Uterus (tissue), 4 donors: ENCODE measurements at regions of chr2 and their contacts with region 1.

Region 1: DNA sequence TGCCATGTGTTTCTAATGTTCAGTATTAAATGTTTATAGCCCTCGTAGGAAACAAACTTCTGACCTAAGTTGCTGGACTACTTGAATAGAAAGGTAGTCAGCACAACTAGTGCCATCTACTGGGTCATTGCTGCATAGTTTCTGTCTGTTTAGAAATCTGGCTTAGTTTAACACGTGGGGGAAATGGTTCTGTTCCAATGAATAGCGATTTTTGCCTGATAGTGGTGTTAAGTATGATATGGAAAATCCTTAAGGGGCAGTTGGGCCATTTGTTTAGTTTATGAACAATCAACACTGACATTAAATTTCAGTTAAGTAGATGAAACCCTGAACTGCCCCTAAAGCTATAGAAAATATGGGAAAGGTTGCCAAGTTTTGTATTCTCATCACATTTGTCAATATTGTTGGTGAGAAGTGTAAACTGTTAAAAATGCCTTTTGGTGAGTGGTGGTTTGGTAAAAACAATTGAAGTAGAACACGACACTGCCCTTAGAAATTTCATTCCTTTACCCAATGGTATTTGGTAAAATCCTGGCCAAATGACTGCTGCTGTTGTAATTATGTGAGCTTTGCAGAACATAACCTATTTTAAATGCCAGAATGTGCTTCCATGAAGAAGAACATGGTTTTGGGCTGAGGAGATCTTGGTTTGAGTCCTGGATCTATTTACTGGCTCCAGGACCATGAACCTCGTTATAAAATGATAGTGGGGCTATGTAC is 13.2 kb downstream of the NABP1 start:
- DNase-seq: peak in 1 of 2 donors; percentile 48
- H3K4me3 ChIP-seq: no peak overlapping the region
- H3K27ac ChIP-seq: no peak overlapping the region
- H3K4me1 ChIP-seq: peaks cover 0 to 4% of the 10 kb centered on the region in 2 donors
- H3K27me3 ChIP-seq: no peaks in the 10 kb centered on the region
- CTCF ChIP-seq: peak; percentile 52 to 76 (median 67)
- POLR2A ChIP-seq: no peak

Region 2: DNA sequence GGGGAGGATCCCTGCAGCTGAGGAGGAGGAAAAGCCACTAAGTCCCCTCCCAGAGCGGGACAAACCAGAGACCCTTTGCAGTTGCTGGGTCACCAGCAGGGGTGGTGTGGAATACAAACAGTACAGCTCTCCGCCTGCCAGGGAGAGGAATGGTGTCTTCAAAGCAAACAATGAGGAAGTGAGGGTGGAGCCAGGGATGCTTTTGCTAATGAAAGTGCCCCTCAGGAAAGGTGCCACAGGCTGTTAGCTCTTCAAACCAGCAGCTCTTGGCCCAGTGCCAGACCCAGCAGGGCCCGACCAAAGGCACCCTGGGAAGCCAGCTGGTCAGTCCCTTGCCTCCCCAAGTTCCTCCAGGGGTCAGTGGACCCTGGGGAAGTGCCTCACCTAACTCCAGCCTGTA is 1474.3 kb before region 1 on chr2:
- intact Hi-C with region 1: no loop called
- DNase-seq: peak; percentile 28 to 35
- H3K4me3 ChIP-seq: no peak overlapping the region
- H3K27ac ChIP-seq: peak overlapping the region in 1 of 2 donors; percentile 59
- H3K4me1 ChIP-seq: no peaks in the 10 kb centered on the region
- H3K27me3 ChIP-seq: no peaks in the 10 kb centered on the region
- CTCF ChIP-seq: no peak
- POLR2A ChIP-seq: no peak

Region 3: GRCh38 chr2:191150600-191151330 is 540.4 kb before region 1 on chr2 and contains the start of gene STAT4:
- intact Hi-C with region 1: no loop called
- DNase-seq: peak; percentile 24 to 29
- H3K4me3 ChIP-seq: peak within 1 kb of the TSS; percentile 24 to 29
- H3K27ac ChIP-seq: no peak within 1 kb of the TSS
- H3K4me1 ChIP-seq: no peaks in the 10 kb centered on the region
- H3K27me3 ChIP-seq: no peaks in the 10 kb centered on the region
- CTCF ChIP-seq: no peak
- POLR2A ChIP-seq: no peak
- total RNA-seq, gene STAT4: 0.51 to 4.8 (median 2.3) TPM in 3 of 4 donors, not detected in the other

Region 4: DNA sequence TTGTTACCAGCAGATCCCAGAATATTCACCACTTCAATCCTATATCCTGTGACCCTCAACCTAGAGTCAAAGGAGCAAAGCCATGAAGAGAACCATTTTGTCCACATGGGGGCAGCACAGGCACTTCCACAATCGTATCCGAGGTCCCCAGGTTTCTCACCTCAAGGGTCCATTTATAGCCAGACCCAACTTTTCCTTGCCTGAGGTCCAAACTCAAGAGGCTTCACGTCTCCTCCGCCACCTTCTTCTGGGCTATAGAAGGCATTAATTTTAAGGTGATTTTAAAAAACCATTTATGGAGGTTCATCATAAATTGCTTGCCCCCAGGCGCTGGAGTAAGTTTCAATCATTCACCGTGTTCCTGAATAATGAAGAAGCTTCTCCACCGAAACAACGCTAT is 124.8 kb before region 1 on chr2:
- intact Hi-C with region 1: loop called (anchors 10 kb)
- DNase-seq: peak; percentile 18 to 23
- H3K4me3 ChIP-seq: no peak overlapping the region
- H3K27ac ChIP-seq: no peak overlapping the region
- H3K4me1 ChIP-seq: no peaks in the 10 kb centered on the region
- H3K27me3 ChIP-seq: no peaks in the 10 kb centered on the region
- CTCF ChIP-seq: peak; percentile 28 to 45 (median 32)
- POLR2A ChIP-seq: no peak

Region 5: DNA sequence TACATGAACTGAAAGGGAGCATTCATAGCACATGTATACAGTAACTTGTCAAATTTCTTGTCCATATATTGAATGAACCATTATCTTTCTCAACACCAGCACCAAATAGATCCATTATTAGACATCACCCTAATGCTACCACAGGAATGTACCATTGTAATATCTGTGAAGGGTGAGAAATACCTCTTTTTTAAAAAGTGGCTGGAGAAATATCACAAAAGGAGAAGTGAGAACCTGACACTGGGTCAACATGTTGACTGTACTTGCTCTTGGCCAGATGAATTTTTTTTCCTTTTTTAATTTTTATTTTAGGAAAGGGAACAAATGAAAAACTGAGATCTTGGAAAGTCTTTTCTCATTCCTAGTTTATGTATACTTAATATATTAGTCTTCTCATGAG is 92.2 kb after region 1 on chr2:
- intact Hi-C with region 1: no loop called
- DNase-seq: no peak
- H3K4me3 ChIP-seq: no peak overlapping the region
- H3K27ac ChIP-seq: no peak overlapping the region
- H3K4me1 ChIP-seq: no peaks in the 10 kb centered on the region
- H3K27me3 ChIP-seq: no peaks in the 10 kb centered on the region
- CTCF ChIP-seq: no peak
- POLR2A ChIP-seq: no peak